Activated CD8-positive, alpha-beta T cell treated with anti-CD3 and anti-CD28 coated beads for 36 hours (primary cell): ENCODE measurements at regions of chr13 and their contacts with region 1.

Region 1: GRCh38 chr13:44484562-44485138 is 91.5 kb downstream of the TSC22D1 start:
- DNase-seq: no peak
- ATAC-seq: peak; percentile 39
- H3K4me3 Mint-ChIP-seq: peak overlapping the region; percentile 55
- H3K27ac Mint-ChIP-seq: peak overlapping the region; percentile 51
- H3K4me1 Mint-ChIP-seq: peaks cover 17% of the 10 kb centered on the region
- H3K27me3 Mint-ChIP-seq: no peaks in the 10 kb centered on the region
- CTCF ChIP-seq: no peak

Region 2: GRCh38 chr13:44465318-44465717 is 19.3 kb before region 1 on chr13:
- CTCF ChIA-PET with region 1: interaction called, 11 read pairs
- POLR2A ChIA-PET with region 1: no interaction called
- intact Hi-C with region 1: no loop called
- DNase-seq: no peak
- ATAC-seq: no peak
- H3K4me3 Mint-ChIP-seq: no peak overlapping the region
- H3K27ac Mint-ChIP-seq: no peak overlapping the region
- H3K4me1 Mint-ChIP-seq: no peaks in the 10 kb centered on the region
- H3K27me3 Mint-ChIP-seq: no peaks in the 10 kb centered on the region
- CTCF ChIP-seq: no peak

Region 3: DNA sequence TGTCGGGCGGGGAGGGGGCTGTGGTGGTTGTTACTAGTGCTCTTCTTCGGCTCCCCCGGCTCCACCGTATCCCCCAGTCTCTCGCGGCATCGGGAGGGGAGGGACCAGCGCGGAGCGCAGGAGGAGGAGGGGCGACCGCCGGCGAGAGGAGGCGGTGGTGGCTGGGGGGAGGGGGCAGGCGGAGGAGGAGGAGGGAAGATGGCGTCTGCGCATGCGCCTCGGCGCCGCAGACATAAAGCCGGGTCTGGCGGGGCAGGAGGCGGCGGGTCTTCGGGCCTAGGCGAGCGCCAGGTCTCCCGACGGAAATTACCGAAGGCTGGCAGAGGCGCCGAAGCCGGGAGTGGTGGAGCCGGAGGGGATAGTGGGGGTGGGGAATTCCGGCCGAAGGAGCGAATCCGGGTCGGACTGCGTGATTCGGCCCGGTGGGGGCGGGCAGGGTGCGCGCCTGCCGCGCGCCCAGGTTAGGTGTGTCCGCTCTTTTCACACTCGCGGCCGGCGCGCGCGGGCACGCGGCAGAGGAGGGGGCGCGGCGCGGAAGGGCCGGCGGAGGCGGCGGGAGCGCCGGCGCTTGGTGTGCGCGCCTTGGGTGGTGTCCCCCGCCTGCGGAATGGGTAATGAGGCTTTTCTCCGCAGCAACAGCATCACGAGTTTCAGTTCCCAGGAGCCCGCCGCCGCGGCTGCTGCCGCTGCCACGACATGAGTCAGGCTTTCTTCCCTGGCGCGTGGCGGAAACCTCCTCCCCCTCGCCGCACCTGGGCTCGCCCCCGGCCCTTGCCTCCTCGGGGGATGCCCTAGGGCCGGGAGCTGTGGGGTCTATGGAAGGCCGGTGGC is 92.8 kb after region 1 on chr13:
- CTCF ChIA-PET with region 1: interaction called, 22 read pairs
- POLR2A ChIA-PET with region 1: no interaction called
- intact Hi-C with region 1: loop called (anchors 5 kb)
- DNase-seq: peak; percentile 96
- ATAC-seq: peak; percentile 79
- H3K4me3 Mint-ChIP-seq: peak overlapping the region; percentile 91
- H3K27ac Mint-ChIP-seq: peak overlapping the region; percentile 92
- H3K4me1 Mint-ChIP-seq: peaks cover 37% of the 10 kb centered on the region
- H3K27me3 Mint-ChIP-seq: no peaks in the 10 kb centered on the region
- CTCF ChIP-seq: no peak

Region 4: DNA sequence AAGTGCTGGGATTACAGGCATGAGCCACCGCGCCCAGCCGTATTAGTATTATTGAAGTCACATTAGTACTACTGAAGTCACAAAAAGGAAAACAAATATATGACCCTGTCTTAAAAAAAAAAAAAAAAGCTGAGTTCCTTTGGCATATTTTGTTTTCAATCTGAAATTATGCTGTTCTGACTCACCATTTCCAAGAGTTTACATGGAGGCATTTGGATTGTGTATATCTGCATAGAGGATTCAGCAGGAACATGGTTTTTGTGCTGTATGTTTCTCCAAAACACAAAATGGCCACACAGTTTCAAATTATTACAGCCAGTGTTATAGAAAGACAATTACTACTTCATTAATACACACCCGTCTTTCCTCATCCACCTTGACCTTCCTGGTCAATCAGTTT is 194.9 kb after region 1 on chr13:
- CTCF ChIA-PET with region 1: no interaction called
- POLR2A ChIA-PET with region 1: no interaction called
- intact Hi-C with region 1: loop called (anchors 10 kb)
- DNase-seq: no peak
- ATAC-seq: no peak
- H3K4me3 Mint-ChIP-seq: no peak overlapping the region
- H3K27ac Mint-ChIP-seq: no peak overlapping the region
- H3K4me1 Mint-ChIP-seq: no peaks in the 10 kb centered on the region
- H3K27me3 Mint-ChIP-seq: no peaks in the 10 kb centered on the region
- CTCF ChIP-seq: no peak

Region 5: GRCh38 chr13:44917589-44918325 is 433.1 kb after region 1 on chr13:
- CTCF ChIA-PET with region 1: interaction called, 12 read pairs
- POLR2A ChIA-PET with region 1: no interaction called
- intact Hi-C with region 1: loop called (anchors 5 kb)
- DNase-seq: peak; percentile 95
- ATAC-seq: peak; percentile 84
- H3K4me3 Mint-ChIP-seq: no peak overlapping the region
- H3K27ac Mint-ChIP-seq: no peak overlapping the region
- H3K4me1 Mint-ChIP-seq: peaks cover 4% of the 10 kb centered on the region
- H3K27me3 Mint-ChIP-seq: no peaks in the 10 kb centered on the region
- CTCF ChIP-seq: peak; percentile 48

Region 6: GRCh38 chr13:44988973-44989817 is 504.5 kb after region 1 on chr13 and contains the starts of genes GPALPP1 and NUFIP1:
- CTCF ChIA-PET with region 1: interaction called, 10 read pairs
- POLR2A ChIA-PET with region 1: no interaction called
- intact Hi-C with region 1: no loop called
- DNase-seq: peak; percentile 98
- ATAC-seq: peak; percentile 97
- H3K4me3 Mint-ChIP-seq: peak within 1 kb of the TSS; percentile 94
- H3K27ac Mint-ChIP-seq: peak within 1 kb of the TSS; percentile 97
- H3K4me1 Mint-ChIP-seq: peaks cover 58% of the 10 kb centered on the region
- H3K27me3 Mint-ChIP-seq: no peaks in the 10 kb centered on the region
- CTCF ChIP-seq: no peak
- total RNA-seq, gene GPALPP1: 30.4 to 31.6 TPM
- total RNA-seq, gene NUFIP1: 10.4 to 11.2 TPM